ENCODE measurements at regions of chr1 and their contacts with region 1.

Region 1: GRCh38 chr1:197924516-197925123 is 7.4 kb downstream of the LHX9 start:
- DNase-seq: peak; percentile 63
- H3K4me3 ChIP-seq: no peak overlapping the region
- H3K27ac ChIP-seq: no peak overlapping the region
- H3K4me1 ChIP-seq: no peaks in the 10 kb centered on the region
- H3K27me3 ChIP-seq: peaks cover 36% of the 10 kb centered on the region
- CTCF ChIP-seq: peak; percentile 79

Region 2: GRCh38 chr1:197526736-197527371 is 397.8 kb before region 1 on chr1:
- CTCF ChIA-PET with region 1: no interaction called
- POLR2A ChIA-PET with region 1: no interaction called
- intact Hi-C with region 1: loop called (anchors 1 kb)
- DNase-seq: peak; percentile 45
- H3K4me3 ChIP-seq: no peak overlapping the region
- H3K27ac ChIP-seq: no peak overlapping the region
- H3K4me1 ChIP-seq: no peaks in the 10 kb centered on the region
- H3K27me3 ChIP-seq: no peaks in the 10 kb centered on the region
- CTCF ChIP-seq: peak; percentile 72

Region 3: DNA sequence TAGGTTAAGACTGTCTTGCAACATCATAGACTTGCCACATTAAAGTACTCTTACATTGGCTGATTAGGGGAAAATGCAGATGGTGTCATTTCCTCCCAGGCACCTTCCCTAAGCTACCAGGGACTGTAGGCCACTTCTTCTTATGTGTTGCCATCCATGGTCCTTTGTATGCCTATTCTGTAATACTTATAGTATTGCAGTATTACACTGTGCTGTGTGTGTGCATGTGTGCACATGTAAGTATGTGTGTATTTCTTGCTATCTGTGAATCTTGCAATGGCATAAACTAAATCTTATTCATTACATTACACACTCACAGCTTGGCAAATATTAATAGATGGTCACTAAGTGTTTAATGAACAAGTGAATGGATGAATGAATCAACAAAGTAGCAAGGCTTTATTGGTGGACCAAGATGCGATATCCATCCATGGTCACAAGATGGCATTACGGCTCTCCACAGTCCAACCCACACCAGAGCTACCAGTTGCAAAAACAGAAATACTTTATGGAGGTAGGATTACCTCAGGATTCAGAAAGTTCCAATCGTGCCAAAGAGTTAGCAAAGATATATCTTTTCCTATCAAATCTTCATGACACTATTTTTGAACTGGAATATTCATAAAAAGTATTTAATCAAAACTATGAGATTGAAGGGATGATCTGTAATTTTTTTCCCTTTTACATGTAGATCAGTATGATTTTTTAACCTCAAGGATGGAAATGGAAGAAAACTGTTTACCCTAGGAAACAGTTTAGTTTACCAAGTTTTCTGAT is 309.5 kb before region 1 on chr1:
- CTCF ChIA-PET with region 1: no interaction called
- POLR2A ChIA-PET with region 1: no interaction called
- intact Hi-C with region 1: loop called (anchors 2 kb)
- DNase-seq: peak; percentile 49
- H3K4me3 ChIP-seq: no peak overlapping the region
- H3K27ac ChIP-seq: no peak overlapping the region
- H3K4me1 ChIP-seq: no peaks in the 10 kb centered on the region
- H3K27me3 ChIP-seq: no peaks in the 10 kb centered on the region
- CTCF ChIP-seq: peak; percentile 71

Region 4: DNA sequence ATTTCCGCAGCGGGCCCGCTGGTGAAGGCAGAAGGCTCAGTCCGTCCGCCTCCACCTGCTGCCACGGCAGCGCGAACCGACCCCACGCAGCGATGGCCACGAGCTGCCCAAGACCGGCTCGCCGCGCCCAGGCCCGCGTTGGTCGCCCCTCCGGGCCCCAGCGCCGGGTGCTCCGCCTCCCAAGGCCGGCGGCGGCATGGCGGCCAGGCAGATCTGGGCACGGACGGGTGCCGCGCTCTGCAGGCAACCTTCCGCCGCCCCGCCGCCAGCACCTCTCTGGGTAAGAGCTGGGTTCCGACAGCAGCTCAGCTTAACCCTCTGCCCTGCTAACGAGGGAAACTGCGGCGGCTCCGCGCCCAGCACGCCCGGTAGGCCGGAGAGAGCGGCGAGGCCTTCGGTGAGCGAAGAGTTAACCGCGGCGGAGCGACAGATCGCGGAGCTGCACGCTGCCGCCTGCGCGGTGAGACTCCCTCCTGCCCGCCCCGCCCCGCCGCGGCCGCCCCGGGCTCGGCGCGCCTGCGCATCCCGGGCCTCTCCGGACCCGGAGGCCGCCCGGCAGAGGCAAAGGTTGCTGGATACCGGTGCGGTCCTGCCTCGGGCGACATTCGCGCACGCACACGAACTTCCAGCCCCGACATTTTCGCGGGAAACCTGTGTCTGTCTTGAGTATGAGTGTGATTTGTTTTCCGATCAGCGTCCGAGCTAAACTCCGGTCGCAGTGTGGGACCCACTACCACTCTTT is 22.0 kb before region 1 on chr1 and contains the start of gene C1orf53:
- CTCF ChIA-PET with region 1: no interaction called
- POLR2A ChIA-PET with region 1: no interaction called
- intact Hi-C with region 1: no loop called
- DNase-seq: peak; percentile 89
- H3K4me3 ChIP-seq: peak within 1 kb of the TSS; percentile 51
- H3K27ac ChIP-seq: peak within 1 kb of the TSS; percentile 87
- H3K4me1 ChIP-seq: peaks cover 3% of the 10 kb centered on the region
- H3K27me3 ChIP-seq: peaks cover 32% of the 10 kb centered on the region
- CTCF ChIP-seq: no peak
- total RNA-seq, gene C1orf53: 1.4 TPM in 1 of 2 replicates, not detected in the other

Region 5: GRCh38 chr1:198328458-198329127 is 404.0 kb after region 1 on chr1:
- CTCF ChIA-PET with region 1: no interaction called
- POLR2A ChIA-PET with region 1: no interaction called
- intact Hi-C with region 1: no loop called
- DNase-seq: no peak
- H3K4me3 ChIP-seq: no peak overlapping the region
- H3K27ac ChIP-seq: no peak overlapping the region
- H3K4me1 ChIP-seq: no peaks in the 10 kb centered on the region
- H3K27me3 ChIP-seq: no peaks in the 10 kb centered on the region
- CTCF ChIP-seq: no peak